B cell (primary cell): ENCODE measurements at regions of chr2 and their contacts with region 1.

Region 1: DNA sequence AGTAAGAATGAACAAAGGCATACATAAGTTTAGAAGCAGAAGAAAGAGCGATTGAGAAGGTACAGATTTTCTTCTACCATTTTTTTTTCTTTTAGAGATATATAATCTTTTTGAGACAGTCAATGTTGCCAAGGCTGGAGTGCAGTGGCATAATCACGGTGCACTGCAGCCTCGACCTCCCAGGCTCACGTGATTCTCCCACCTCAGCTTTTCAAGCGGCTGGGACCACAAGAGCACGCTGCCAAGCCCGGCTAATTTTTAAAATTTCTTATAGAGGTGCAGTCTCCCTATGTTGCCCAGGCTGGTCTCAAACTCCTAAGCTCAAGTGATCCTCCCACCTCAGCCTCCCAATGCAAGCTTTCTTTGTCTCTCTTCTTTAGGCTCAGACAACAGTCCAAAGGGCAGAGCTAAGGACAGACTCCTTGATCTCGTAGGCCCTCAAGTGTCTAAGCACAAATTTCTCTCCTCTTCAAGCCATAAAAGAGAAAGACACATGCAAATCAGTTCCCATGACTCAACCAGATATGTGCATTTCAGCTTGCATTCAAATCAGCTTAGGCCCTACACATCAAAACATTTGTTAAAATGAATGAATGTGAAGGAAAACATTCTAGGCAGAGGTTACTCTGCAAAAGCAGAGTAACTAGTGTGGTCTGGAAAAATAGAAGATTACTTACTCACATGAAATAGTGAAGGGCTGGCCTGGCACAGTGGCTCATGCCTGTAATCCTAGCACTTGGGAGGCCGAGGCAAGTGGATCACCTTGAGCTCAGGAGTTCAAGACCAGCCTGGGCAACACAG is 18.0 kb downstream of the ITSN2 start:
- DNase-seq: peak; percentile 44
- ATAC-seq: peak; percentile 58
- H3K4me3 ChIP-seq: peak overlapping the region in 1 of 5 experiments; percentile 54
- H3K4me3 Mint-ChIP-seq: peak overlapping the region; percentile 59
- H3K27ac ChIP-seq: peak overlapping the region; percentile 53 to 70
- H3K27ac Mint-ChIP-seq: peak overlapping the region; percentile 83
- H3K4me1 ChIP-seq: peaks cover 73 to 81% of the 10 kb centered on the region in 2 donors
- H3K4me1 Mint-ChIP-seq: peaks cover 82% of the 10 kb centered on the region
- H3K27me3 ChIP-seq: no peaks in the 10 kb centered on the region
- H3K27me3 Mint-ChIP-seq: no peaks in the 10 kb centered on the region
- CTCF ChIP-seq: no peak

Region 2: DNA sequence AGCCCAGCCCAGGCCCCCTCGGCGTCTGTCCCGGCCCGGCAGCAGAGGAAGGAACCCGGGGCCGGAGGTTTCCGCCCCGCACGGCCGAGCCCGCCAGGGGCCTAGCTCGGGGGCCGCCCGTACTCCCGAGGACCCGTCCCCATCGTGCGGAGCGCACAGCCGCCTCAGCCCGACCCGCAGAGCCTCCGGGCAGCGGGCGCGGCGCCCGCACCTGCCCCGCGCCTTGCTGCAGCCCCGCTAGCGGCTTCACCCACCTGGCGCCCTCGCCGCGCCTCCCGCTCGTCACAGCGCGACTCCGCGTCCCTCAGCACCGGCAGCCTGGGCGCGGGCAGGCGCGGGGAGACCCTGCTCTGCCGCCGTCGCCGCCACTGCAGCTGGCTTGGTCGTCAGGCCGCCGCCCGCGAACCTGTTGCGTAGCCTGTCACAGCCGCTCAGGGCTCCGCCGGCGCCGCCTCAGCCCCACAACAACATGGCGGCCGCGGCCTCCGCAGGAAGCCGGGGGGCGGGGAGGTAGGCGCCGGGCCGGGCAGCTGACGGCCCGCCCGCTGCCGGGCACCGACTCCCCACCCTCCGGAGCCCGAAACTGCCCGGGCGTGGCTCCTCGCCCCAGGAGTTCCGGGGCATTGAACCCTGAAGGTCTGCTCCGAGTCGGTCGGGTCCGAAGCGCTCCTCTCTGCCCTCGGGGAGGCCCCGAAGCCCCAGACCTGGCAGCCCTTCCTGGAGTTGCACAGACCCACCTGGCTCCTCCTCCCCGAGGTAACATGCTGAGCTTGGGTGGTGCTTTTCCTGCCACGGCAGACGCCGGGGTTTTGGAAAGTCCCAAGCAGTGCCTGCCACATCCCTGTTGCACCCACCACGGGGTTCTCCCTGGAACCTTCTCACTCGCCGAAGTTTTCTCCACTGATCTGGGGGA is 18.0 kb after region 1 on chr2 and contains the start of gene ITSN2:
- CTCF ChIA-PET with region 1: interaction called, 3 read pairs
- POLR2A ChIA-PET with region 1: interaction called, 8 read pairs
- intact Hi-C with region 1: loop called (anchors 2 kb)
- DNase-seq: peak; percentile 96
- ATAC-seq: peak; percentile 84
- H3K4me3 ChIP-seq: peak within 1 kb of the TSS; percentile 75 to 91 (median 88)
- H3K4me3 Mint-ChIP-seq: peak within 1 kb of the TSS; percentile 93
- H3K27ac ChIP-seq: peak within 1 kb of the TSS; percentile 97 to 99
- H3K27ac Mint-ChIP-seq: peak within 1 kb of the TSS; percentile 99
- H3K4me1 ChIP-seq: peaks cover 40 to 46% of the 10 kb centered on the region in 2 donors
- H3K4me1 Mint-ChIP-seq: peaks cover 50% of the 10 kb centered on the region
- H3K27me3 ChIP-seq: no peaks in the 10 kb centered on the region
- H3K27me3 Mint-ChIP-seq: no peaks in the 10 kb centered on the region
- CTCF ChIP-seq: no peak
- total RNA-seq, gene ITSN2: 200 and 203 TPM in 2 replicates

Region 3: DNA sequence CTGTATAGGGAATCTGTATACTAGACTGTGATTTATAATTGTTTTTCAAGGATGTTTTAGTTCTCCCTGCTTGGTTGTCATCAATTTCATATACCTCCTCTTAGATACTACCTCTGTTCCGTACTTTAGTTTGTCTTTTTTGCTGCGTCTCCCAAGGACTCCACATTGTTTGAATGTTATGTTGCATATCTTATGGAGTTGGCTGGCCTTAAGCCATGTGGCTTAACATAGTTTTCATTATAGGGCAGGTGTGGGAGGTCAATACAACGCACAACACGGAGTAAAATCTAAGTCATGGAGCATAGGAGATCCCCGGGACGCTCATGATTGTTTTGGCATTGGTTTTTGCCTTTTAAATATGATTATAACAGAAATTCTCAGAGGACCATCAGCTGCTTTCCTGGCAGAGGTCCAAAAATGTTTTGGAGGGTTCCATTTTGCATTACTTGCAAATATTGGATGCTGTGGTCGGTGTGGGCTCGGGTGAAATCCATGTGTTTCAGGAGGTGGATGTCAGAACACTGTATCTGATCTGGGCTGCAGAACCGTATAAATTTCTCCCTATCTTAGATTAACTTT is 152.0 kb after region 1 on chr2:
- CTCF ChIA-PET with region 1: no interaction called
- POLR2A ChIA-PET with region 1: no interaction called
- intact Hi-C with region 1: no loop called
- DNase-seq: no peak
- ATAC-seq: no peak
- H3K4me3 ChIP-seq: no peak overlapping the region
- H3K4me3 Mint-ChIP-seq: no peak overlapping the region
- H3K27ac ChIP-seq: no peak overlapping the region
- H3K27ac Mint-ChIP-seq: peak overlapping the region; percentile 32
- H3K4me1 ChIP-seq: peaks cover 20 to 21% of the 10 kb centered on the region in 2 donors
- H3K4me1 Mint-ChIP-seq: peaks cover 49% of the 10 kb centered on the region
- H3K27me3 ChIP-seq: no peaks in the 10 kb centered on the region
- H3K27me3 Mint-ChIP-seq: no peaks in the 10 kb centered on the region
- CTCF ChIP-seq: no peak